ENCODE measurements at regions of chr17 and their contacts with region 1.

Region 1: DNA sequence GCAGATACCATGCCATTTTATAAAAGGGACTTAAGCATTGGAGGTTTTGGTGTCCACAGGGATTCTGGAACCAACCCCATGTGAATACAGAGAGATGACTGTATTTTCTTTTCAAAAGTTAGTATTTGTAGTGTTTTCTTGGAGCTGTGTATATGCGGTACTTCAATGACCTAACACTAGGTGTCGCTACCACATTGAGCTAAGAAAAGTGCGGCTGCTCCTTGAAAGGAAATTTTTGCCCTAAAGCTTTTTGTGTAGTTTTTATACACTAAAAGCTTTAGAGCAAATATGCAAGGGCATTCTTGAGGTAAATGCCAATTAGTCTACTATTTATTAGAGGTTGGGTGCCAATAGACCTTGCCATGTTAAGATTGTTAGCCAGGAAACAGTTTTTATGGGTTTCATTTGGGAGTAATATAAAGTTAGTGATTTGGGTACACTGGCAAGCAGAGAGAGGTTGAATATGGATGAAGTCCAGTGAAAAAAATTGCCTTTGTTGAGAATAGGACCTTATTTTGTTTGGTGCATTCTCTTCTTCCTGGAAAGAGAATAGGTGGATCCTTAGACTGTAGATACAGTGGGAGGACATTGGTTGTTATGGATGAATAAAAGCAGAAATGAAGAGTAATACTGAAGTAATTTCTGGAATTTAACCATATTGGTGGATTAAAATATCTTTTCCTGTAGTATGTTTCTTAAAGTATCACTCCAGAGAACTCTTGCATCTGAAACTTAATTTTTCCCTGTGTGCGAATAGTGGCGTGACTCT is 43.3 kb downstream of the BCAS3 start:
- DNase-seq: peak in 4 of 5 donors; percentile 37 to 48 (median 46)
- H3K4me3 ChIP-seq: no peak overlapping the region
- H3K4me3 Mint-ChIP-seq: no peak overlapping the region
- H3K27ac ChIP-seq: no peak overlapping the region
- H3K27ac Mint-ChIP-seq: no peak overlapping the region
- H3K4me1 ChIP-seq: no peaks in the 10 kb centered on the region
- H3K4me1 Mint-ChIP-seq: peaks cover 0 to 4% (median 1%) of the 10 kb centered on the region in 4 donors
- H3K27me3 ChIP-seq: no peaks in the 10 kb centered on the region
- H3K27me3 Mint-ChIP-seq: no peaks in the 10 kb centered on the region

Region 2: GRCh38 chr17:60704170-60704569 is 16.8 kb before region 1 on chr17:
- CTCF ChIA-PET with region 1: interaction called, 15 read pairs
- POLR2A ChIA-PET with region 1: no interaction called
- intact Hi-C with region 1: no loop called
- DNase-seq: no peak
- H3K4me3 ChIP-seq: no peak overlapping the region
- H3K4me3 Mint-ChIP-seq: no peak overlapping the region
- H3K27ac ChIP-seq: no peak overlapping the region
- H3K27ac Mint-ChIP-seq: peak overlapping the region in 1 of 7 donors; percentile 63
- H3K4me1 ChIP-seq: no peaks in the 10 kb centered on the region
- H3K4me1 Mint-ChIP-seq: no peaks in the 10 kb centered on the region
- H3K27me3 ChIP-seq: no peaks in the 10 kb centered on the region
- H3K27me3 Mint-ChIP-seq: no peaks in the 10 kb centered on the region

Region 3: GRCh38 chr17:61002316-61002736 is 281.4 kb after region 1 on chr17:
- CTCF ChIA-PET with region 1: no interaction called
- POLR2A ChIA-PET with region 1: no interaction called
- intact Hi-C with region 1: loop called (anchors 2 kb)
- DNase-seq: peak in 4 of 5 donors; percentile 24 to 33 (median 27)
- H3K4me3 ChIP-seq: no peak overlapping the region
- H3K4me3 Mint-ChIP-seq: no peak overlapping the region
- H3K27ac ChIP-seq: no peak overlapping the region
- H3K27ac Mint-ChIP-seq: no peak overlapping the region
- H3K4me1 ChIP-seq: no peaks in the 10 kb centered on the region
- H3K4me1 Mint-ChIP-seq: no peaks in the 10 kb centered on the region
- H3K27me3 ChIP-seq: no peaks in the 10 kb centered on the region
- H3K27me3 Mint-ChIP-seq: no peaks in the 10 kb centered on the region

Region 4: DNA sequence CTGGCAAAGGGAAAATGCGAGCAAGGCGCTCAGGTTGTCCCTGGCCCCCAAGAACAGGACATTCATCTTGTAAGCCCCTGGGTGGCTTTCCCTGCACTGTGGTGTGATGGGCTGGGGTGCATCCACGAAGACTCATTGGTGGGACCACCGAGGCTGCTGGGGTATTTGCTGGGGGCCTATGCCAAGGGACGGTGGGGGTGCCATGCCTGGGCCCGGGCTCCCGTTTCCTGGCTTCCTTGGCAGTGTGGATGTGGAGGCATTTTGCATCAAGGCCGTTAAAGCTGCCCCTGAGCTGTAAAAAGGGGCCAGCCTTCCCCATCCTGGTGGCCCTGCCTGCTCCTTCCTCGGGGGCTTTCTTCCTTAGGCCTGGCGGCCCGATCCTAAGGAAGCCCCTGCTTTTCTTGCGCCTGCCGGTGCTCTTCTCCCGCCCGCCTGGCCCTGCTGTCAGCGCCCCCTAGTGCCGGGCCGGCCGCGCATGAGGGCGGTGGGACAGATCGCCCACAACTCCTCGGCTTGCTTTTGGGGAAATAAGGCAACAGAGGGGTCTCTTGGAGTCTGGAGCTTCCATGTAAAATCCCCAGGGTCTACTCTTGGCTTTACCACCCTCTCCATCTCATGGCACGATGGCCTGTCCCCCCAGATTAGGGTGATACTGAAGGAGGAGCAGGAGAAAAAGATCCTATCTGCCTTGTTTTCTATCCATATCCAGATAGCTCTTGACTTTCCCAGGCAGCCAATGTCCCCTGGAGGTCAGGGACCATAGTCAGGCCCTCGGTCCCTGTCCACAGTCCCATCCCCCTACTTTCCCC is 668.9 kb after region 1 on chr17:
- CTCF ChIA-PET with region 1: interaction called, 12 read pairs
- POLR2A ChIA-PET with region 1: no interaction called
- intact Hi-C with region 1: loop called (anchors 5 kb)
- DNase-seq: no peak
- H3K4me3 ChIP-seq: no peak overlapping the region
- H3K4me3 Mint-ChIP-seq: no peak overlapping the region
- H3K27ac ChIP-seq: no peak overlapping the region
- H3K27ac Mint-ChIP-seq: peak overlapping the region in 1 of 7 donors; percentile 2
- H3K4me1 ChIP-seq: peaks cover 3% of the 10 kb centered on the region
- H3K4me1 Mint-ChIP-seq: peaks cover 0 to 5% (median 0%) of the 10 kb centered on the region in 4 donors
- H3K27me3 ChIP-seq: no peaks in the 10 kb centered on the region
- H3K27me3 Mint-ChIP-seq: peaks cover 2 to 9% of the 10 kb centered on the region in 2 donors

Measured in CD4-positive, alpha-beta memory T cell (primary cell).